Heart left ventricle (tissue), 16 donors: ENCODE measurements at regions of chr16 and their contacts with region 1.

Region 1: GRCh38 chr16:12340151-12340733 is 363.7 kb downstream of the SNX29 start:
- DNase-seq: no peak
- ATAC-seq: no peak
- H3K4me3 ChIP-seq: no peak overlapping the region
- H3K27ac ChIP-seq: no peak overlapping the region
- H3K4me1 ChIP-seq: peaks cover 0 to 27% (median 4%) of the 10 kb centered on the region in 12 donors
- H3K27me3 ChIP-seq: no peaks in the 10 kb centered on the region
- CTCF ChIP-seq: peak in 10 of 12 donors; percentile 10 to 43 (median 27)
- POLR2A ChIP-seq: no peak

Region 2: GRCh38 chr16:11632464-11632939 is 707.7 kb before region 1 on chr16:
- intact Hi-C with region 1: no loop called
- DNase-seq: peak; percentile 46 to 71 (median 68)
- ATAC-seq: peak; percentile 21 to 78 (median 50)
- H3K4me3 ChIP-seq: no peak overlapping the region
- H3K27ac ChIP-seq: peak overlapping the region in 8 of 12 donors; percentile 8 to 69 (median 58)
- H3K4me1 ChIP-seq: peaks cover 0 to 53% (median 6%) of the 10 kb centered on the region in 12 donors
- H3K27me3 ChIP-seq: no peaks in the 10 kb centered on the region
- CTCF ChIP-seq: no peak
- POLR2A ChIP-seq: no peak

Region 3: GRCh38 chr16:12228602-12229499 is 111.4 kb before region 1 on chr16:
- intact Hi-C with region 1: loop called in 1 of 10 experiments (anchors 5 kb)
- DNase-seq: peak in 4 of 5 donors; percentile 30 to 49 (median 36)
- ATAC-seq: peak; percentile 60 to 82 (median 80)
- H3K4me3 ChIP-seq: no peak overlapping the region
- H3K27ac ChIP-seq: no peak overlapping the region
- H3K4me1 ChIP-seq: peaks cover 0 to 6% (median 0%) of the 10 kb centered on the region in 12 donors
- H3K27me3 ChIP-seq: no peaks in the 10 kb centered on the region
- CTCF ChIP-seq: peak; percentile 39 to 73 (median 58)
- POLR2A ChIP-seq: no peak